ENCODE measurements at regions of chr22 and their contacts with region 1.

Region 1: GRCh38 chr22:45994491-45995404 is 17.8 kb upstream of the WNT7B start:
- DNase-seq: peak; percentile 83
- CTCF ChIP-seq: peak; percentile 96

Region 2: GRCh38 chr22:45984316-45984916 is 10.3 kb before region 1 on chr22:
- CTCF ChIA-PET with region 1: interaction called, 10 read pairs
- POLR2A ChIA-PET with region 1: no interaction called
- DNase-seq: no peak
- CTCF ChIP-seq: no peak

Region 3: DNA sequence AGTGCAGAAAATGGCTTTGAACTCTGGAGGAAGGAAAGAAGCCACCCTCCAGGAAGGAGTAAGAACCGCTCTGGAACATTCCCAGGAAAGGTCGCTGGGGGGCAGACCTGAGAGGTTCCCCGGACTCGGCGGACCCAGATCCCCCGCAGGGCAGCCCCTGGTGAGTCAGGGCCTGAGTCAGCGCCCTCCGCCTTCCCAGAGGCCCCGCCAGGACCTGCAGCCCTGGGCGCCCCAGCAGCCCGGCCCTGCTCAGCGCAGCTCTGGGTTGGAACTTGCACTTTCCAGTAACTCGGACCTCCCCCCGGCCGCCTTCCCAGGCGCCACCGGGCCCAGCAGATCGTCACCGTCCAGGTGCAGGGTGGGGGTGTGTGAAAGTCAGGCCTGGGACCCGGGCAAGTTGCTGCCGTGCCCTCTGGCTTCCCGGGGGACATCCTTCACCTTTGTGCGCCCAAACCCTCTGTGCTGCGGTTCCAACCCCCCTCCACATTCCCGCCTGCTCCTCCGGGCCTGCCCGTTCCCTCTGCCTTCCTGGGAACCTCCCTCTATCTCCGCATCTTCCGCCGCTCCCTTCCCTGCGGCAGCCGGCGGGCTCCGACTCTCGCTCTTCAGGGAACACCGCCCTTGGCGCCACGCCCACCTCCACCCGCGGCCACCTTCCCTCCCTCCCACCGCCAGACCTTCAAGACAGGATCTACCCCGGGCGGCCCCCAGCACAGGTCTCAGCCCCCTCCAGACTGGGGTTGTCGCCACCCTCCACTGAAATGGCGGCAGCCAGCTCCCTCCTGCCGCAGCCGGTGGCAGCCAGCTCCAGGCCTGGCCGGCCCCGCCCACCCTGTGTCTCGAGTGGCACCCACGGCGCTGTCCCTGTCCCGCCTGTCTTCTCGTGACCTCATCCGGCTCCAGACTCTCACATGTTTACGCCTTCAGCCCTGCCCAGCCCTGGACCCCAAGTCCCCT is 19.0 kb after region 1 on chr22:
- CTCF ChIA-PET with region 1: interaction called, 68 read pairs
- POLR2A ChIA-PET with region 1: no interaction called
- DNase-seq: peak; percentile 90
- CTCF ChIP-seq: peak; percentile 58

Measured in GM10248 (cell line).